BJ (cell line): ENCODE measurements at regions of chr6 and their contacts with region 1.

Region 1: GRCh38 chr6:157323255-157323965 is at the start of gene TMEM242:
- DNase-seq: peak; percentile 57
- H3K4me3 ChIP-seq: peak within 1 kb of the TSS; percentile 61
- H3K27me3 ChIP-seq: no peaks in the 10 kb centered on the region
- CTCF ChIP-seq: peak; percentile 54
- polyA plus RNA-seq, gene TMEM242: 4.4 and 6.2 TPM in 2 replicates

Region 2: GRCh38 chr6:157656437-157656997 is 333.1 kb after region 1 on chr6:
- CTCF ChIA-PET with region 1: no interaction called
- POLR2A ChIA-PET with region 1: interaction called, 17 read pairs
- DNase-seq: no peak
- H3K4me3 ChIP-seq: no peak overlapping the region
- H3K27me3 ChIP-seq: no peaks in the 10 kb centered on the region
- CTCF ChIP-seq: no peak